ENCODE measurements at regions of chr10 and their contacts with region 1.

Region 1: DNA sequence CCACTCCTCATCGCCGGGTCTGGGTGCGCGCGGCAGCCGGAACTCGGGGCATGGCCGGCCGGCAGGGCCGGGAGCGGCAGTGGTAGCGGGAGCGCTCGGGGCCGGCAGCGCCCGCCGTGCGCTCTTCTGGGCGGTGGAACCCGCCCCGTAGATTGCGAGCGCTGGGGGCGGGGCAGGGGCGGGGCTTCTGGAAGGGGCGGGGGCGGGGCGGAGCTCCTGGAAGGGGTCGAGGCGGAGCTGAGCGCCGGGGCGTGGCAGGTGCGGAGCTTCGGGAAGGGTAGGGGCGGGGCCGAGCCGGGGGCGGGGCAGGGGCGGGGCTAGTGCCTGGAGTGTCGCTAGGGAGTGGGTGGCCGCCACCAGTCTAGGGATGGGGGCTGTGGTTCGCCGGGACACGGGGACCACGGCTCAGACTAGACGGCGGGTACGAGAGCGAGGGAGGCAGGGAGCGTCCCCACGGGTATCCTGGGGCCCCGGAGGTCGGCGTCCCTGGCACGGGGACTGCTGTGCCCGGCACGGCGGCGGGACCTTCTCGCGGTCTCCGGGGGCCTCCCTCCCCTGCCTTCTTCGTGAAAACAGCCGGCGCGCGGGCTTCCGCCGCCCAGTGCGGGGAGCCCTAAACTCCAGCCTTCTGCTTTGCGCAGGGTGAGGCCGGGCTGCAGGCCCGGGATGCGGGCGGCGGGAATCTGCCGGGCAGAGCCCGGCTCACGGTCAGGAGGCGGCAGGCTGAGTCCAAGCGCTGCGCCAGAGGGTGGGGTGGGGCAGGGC is at the start of gene STK32C:
- DNase-seq: peak; percentile 84 to 89 (median 86)
- H3K4me3 ChIP-seq: peak within 1 kb of the TSS; percentile 69 to 87 (median 82)
- H3K4me3 Mint-ChIP-seq: peak within 1 kb of the TSS; percentile 96 to 97
- H3K27ac ChIP-seq: peak within 1 kb of the TSS in 1 of 2 donors; percentile 56
- H3K27ac Mint-ChIP-seq: peak within 1 kb of the TSS in 2 of 7 donors; percentile 26 to 76
- H3K4me1 ChIP-seq: peaks cover 16 to 24% of the 10 kb centered on the region in 2 donors
- H3K4me1 Mint-ChIP-seq: peaks cover 24% of the 10 kb centered on the region
- H3K27me3 ChIP-seq: peaks cover 4 to 33% of the 10 kb centered on the region in 2 donors
- H3K27me3 Mint-ChIP-seq: peaks cover 24 to 41% (median 25%) of the 10 kb centered on the region in 3 donors
- CTCF ChIP-seq: no peak
- polyA plus RNA-seq, gene STK32C: 13.6 to 22.8 (median 18.4) TPM

Region 2: DNA sequence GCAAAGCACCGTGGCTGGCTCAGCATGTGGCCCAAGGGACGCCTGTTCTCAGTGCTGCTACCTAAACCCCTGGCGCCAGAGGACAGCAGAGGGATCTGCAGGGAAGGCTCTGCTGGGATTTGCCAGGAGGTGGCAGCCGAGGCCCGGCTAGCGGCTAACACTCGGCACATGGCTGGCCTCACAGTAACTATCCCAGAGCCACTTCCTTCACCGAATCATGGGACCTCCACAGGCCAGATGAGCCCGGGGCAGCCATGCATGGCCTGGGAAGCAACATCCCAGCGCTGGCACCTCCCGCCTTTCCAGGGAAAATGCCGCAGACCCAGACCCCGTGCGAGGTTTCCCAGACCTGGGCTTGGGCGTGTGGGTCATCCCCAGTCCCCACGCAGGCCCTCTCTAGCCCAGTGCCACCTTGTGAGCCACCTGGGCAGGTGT is 84.8 kb before region 1 on chr10:
- intact Hi-C with region 1: loop called in 1 of 2 experiments (anchors 10 kb)
- DNase-seq: peak; percentile 74 to 84 (median 80)
- H3K4me3 ChIP-seq: no peak overlapping the region
- H3K4me3 Mint-ChIP-seq: no peak overlapping the region
- H3K27ac ChIP-seq: no peak overlapping the region
- H3K27ac Mint-ChIP-seq: no peak overlapping the region
- H3K4me1 ChIP-seq: peaks cover 38 to 45% of the 10 kb centered on the region in 2 donors
- H3K4me1 Mint-ChIP-seq: peaks cover 40% of the 10 kb centered on the region
- H3K27me3 ChIP-seq: no peaks in the 10 kb centered on the region
- H3K27me3 Mint-ChIP-seq: peaks cover 1 to 3% (median 2%) of the 10 kb centered on the region in 3 donors
- CTCF ChIP-seq: peak; percentile 91

Region 3: GRCh38 chr10:132331526-132332432 is 23.8 kb after region 1 on chr10 and contains the start of gene LRRC27:
- intact Hi-C with region 1: loop called (anchors 2 kb)
- DNase-seq: peak; percentile 94 to 99 (median 98)
- H3K4me3 ChIP-seq: peak within 1 kb of the TSS; percentile 95 to 97 (median 96)
- H3K4me3 Mint-ChIP-seq: peak within 1 kb of the TSS; percentile 86 to 96
- H3K27ac ChIP-seq: peak within 1 kb of the TSS; percentile 86 to 88
- H3K27ac Mint-ChIP-seq: peak within 1 kb of the TSS; percentile 87 to 96 (median 94)
- H3K4me1 ChIP-seq: peaks cover 73 to 76% of the 10 kb centered on the region in 2 donors
- H3K4me1 Mint-ChIP-seq: peaks cover 81% of the 10 kb centered on the region
- H3K27me3 ChIP-seq: no peaks in the 10 kb centered on the region
- H3K27me3 Mint-ChIP-seq: peaks cover 0 to 2% (median 0%) of the 10 kb centered on the region in 3 donors
- CTCF ChIP-seq: no peak
- polyA plus RNA-seq, gene LRRC27: 3.6 to 12.8 (median 3.6) TPM

Region 4: DNA sequence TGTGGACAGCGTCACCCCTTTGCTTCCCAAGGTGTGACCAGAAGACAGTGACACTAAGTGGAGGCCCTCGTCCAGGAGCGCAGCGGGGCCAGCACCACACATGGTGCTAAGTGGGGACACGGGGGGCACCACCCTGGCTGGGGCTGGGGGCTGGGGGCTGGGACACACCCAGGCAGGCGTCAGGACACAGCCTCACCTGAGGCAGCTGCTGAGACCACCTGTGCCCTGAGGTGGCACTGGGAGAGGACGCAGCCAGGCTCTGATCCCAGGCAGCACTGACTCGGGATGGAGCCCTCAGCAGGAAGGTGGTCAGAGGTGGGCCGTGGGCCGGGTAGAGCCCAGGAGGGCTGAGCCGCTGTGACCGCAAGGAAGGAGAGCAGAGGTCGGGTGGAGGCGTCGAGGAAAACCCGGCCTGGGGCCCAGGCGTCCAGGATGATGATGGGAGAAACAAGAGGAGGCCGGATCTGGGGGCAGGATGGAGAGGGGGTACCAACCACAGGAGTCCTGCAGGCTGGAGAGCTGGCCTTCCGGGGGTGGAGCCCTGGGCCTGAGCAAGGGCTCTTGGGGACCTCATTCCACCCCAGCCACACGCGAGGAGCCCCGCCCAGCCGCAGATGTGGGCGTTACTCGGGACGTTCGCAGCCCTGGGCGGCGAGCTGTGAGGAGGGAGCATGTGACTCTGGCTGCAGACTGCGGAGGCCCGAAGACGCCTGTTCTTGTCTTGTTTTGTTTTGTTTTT is 46.5 kb after region 1 on chr10:
- intact Hi-C with region 1: loop called in 1 of 2 experiments (anchors 5 kb)
- DNase-seq: no peak
- H3K4me3 ChIP-seq: no peak overlapping the region
- H3K4me3 Mint-ChIP-seq: no peak overlapping the region
- H3K27ac ChIP-seq: no peak overlapping the region
- H3K27ac Mint-ChIP-seq: no peak overlapping the region
- H3K4me1 ChIP-seq: peaks cover 2 to 8% of the 10 kb centered on the region in 2 donors
- H3K4me1 Mint-ChIP-seq: peaks cover 17% of the 10 kb centered on the region
- H3K27me3 ChIP-seq: no peaks in the 10 kb centered on the region
- H3K27me3 Mint-ChIP-seq: peaks cover 0 to 2% (median 0%) of the 10 kb centered on the region in 3 donors
- CTCF ChIP-seq: no peak

Region 5: DNA sequence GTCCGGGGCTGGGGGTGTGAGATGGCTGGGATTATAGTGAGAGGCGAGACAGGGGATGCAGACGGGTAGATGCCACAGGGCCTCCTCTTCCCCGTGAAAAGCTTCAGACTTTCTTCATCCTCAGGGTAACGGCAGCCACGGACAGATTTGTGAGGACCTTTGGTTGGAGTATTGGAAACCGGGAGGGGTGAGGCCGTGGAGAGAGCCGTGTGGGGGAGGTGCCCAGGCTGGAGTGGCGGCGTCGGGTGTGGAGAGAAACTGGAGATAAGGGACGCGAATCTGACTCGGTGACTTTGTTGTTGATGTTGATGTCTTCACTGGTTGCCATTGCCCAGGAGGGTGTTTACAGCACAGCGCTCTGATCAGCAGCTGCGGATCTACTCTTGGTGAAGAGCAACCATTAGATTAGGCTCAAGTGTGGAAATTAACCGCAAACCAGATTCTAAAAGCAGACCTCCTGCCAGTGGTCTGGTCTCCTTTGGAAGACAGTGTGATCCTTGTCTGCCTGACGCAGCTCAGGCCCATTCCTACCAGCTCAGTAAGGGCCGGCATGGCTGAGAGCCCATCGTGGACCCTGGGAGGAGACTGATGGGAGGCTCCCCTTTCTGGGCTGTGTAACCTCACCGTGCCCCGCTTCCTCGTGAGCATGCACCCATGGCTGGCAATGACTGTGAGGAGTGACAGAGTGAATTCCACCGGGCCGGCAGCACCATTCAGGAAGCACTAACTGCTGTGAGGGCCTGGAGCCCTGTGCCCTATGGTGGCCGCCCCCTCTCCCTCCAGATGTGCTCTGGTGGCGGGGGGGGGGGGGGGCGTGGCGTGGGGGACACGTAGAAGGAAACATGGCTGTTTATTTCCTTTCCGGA is 319.9 kb after region 1 on chr10:
- intact Hi-C with region 1: no loop called
- DNase-seq: peak; percentile 37 to 63 (median 49)
- H3K4me3 ChIP-seq: no peak overlapping the region
- H3K4me3 Mint-ChIP-seq: no peak overlapping the region
- H3K27ac ChIP-seq: no peak overlapping the region
- H3K27ac Mint-ChIP-seq: peak overlapping the region in 5 of 7 donors; percentile 47 to 82 (median 61)
- H3K4me1 ChIP-seq: peaks cover 22 to 31% of the 10 kb centered on the region in 2 donors
- H3K4me1 Mint-ChIP-seq: peaks cover 38% of the 10 kb centered on the region
- H3K27me3 ChIP-seq: no peaks in the 10 kb centered on the region
- H3K27me3 Mint-ChIP-seq: no peaks in the 10 kb centered on the region
- CTCF ChIP-seq: no peak

Region 6: DNA sequence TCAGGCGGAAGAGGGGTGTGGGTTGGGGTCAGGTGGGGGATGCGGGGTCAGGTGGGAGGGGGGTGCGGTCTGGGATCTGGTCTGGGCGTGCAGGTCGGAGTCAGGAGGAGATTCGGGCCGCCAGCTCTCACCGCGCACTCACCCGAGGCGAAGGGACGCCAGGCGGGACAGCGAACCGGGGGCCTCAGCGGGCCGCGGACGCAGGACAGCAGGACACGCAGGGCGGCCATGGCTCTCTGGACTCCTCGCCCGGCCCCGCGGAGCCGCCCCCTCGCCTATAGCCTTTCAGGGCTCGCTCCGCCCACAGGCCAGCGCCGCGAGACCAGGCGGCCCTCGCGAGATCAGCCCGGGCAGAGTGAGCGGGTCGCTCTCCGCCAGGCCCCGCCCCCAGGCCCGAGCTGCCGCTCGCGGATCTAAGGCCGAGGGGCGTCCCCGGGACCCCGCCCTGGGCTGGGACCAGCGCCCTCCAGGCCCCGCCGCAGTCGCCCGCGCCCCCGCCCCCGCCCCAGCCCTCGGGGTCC is 1065.2 kb after region 1 on chr10 and contains the start of gene ECHS1:
- intact Hi-C with region 1: loop called in 1 of 2 experiments (anchors 10 kb)
- DNase-seq: peak; percentile 87 to 93 (median 90)
- H3K4me3 ChIP-seq: peak within 1 kb of the TSS; percentile 53 to 80 (median 77)
- H3K4me3 Mint-ChIP-seq: peak within 1 kb of the TSS; percentile 84 to 92
- H3K27ac ChIP-seq: peak within 1 kb of the TSS; percentile 74 to 79
- H3K27ac Mint-ChIP-seq: peak within 1 kb of the TSS; percentile 81 to 91 (median 87)
- H3K4me1 ChIP-seq: peaks cover 22 to 26% of the 10 kb centered on the region in 2 donors
- H3K4me1 Mint-ChIP-seq: peaks cover 16% of the 10 kb centered on the region
- H3K27me3 ChIP-seq: peaks cover 0 to 2% of the 10 kb centered on the region in 2 donors
- H3K27me3 Mint-ChIP-seq: peaks cover 0 to 10% (median 10%) of the 10 kb centered on the region in 3 donors
- CTCF ChIP-seq: no peak
- polyA plus RNA-seq, gene ECHS1: 34.6 to 102 (median 85.1) TPM